Spleen (tissue), 13 donors: ENCODE measurements at regions of chr12 and their contacts with region 1.

Region 1: DNA sequence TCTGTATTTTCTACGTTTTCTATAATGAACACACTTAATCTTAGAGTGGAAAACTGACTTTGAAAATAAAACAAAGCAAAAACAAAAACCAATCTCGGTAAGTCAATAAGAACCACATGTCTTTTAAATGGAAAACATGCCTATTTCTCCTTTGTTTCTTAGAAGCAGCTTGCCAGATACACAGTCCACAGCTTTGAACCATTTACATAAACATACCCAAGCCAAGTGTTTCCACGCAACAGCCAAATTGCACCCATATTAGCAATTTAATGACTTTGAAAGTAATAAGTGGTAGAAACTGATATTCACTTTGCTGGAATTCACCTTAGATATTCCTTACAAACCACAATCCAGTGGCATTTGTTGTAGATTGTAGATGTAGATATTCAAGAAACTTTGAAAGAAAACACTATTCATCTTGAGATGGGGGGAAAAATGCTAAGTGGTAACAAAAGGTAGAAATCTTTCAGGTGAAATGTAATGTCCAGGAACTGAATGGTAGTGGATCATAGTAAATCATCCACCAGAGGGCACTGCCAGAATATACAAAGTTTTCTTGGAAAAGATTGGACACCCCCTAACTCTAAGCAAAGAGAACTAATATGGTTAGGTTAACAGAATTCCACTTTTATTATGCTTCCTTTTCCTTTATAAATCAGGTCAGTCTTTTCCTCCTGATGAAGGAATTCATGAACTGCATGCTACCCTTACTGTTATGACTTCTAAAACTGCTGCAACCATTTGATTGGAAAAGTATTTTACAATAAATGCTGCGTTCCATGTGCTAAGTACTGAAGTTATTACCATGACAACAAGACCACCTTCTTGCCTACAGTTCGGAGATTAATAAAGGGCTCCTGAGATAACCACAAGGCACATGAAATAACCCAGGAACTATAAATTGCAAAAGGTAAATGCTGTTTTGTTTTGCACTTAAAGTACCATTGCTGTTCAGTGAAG is 69.8 kb downstream of the RERG start:
- DNase-seq: no peak
- H3K4me3 ChIP-seq: no peak overlapping the region
- H3K27ac ChIP-seq: peak overlapping the region in 6 of 8 donors; percentile 3 to 60 (median 24)
- H3K4me1 ChIP-seq: peaks cover 0 to 31% (median 18%) of the 10 kb centered on the region in 6 donors
- H3K27me3 ChIP-seq: no peaks in the 10 kb centered on the region
- CTCF ChIP-seq: peak in 9 of 11 experiments; percentile 15 to 64 (median 45)
- POLR2A ChIP-seq: no peak

Region 2: DNA sequence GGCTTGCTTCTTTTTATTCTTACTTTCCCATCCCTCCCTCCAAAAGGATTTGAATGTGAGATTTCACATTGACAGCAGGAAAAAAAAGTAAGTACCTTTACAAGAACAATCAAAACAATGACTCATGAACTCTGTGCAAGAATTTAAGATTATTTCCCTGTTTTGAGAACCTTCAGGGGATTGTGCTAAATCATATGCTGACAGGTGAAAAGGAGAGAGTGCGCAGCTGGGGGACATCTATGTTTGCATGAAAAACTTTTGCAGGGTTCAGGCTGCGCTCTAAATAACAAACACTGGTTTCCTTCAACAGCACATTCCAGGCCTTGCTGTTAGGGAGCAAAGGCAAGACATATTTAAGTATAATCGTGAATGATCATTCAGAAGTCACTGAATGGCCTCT is 42.5 kb after region 1 on chr12:
- intact Hi-C with region 1: no loop called
- DNase-seq: no peak
- H3K4me3 ChIP-seq: no peak overlapping the region
- H3K27ac ChIP-seq: peak overlapping the region in 1 of 8 donors; percentile 20
- H3K4me1 ChIP-seq: peaks cover 0 to 7% (median 0%) of the 10 kb centered on the region in 6 donors
- H3K27me3 ChIP-seq: peaks cover 0 to 5% (median 0%) of the 10 kb centered on the region in 7 donors
- CTCF ChIP-seq: no peak
- POLR2A ChIP-seq: no peak

Region 3: DNA sequence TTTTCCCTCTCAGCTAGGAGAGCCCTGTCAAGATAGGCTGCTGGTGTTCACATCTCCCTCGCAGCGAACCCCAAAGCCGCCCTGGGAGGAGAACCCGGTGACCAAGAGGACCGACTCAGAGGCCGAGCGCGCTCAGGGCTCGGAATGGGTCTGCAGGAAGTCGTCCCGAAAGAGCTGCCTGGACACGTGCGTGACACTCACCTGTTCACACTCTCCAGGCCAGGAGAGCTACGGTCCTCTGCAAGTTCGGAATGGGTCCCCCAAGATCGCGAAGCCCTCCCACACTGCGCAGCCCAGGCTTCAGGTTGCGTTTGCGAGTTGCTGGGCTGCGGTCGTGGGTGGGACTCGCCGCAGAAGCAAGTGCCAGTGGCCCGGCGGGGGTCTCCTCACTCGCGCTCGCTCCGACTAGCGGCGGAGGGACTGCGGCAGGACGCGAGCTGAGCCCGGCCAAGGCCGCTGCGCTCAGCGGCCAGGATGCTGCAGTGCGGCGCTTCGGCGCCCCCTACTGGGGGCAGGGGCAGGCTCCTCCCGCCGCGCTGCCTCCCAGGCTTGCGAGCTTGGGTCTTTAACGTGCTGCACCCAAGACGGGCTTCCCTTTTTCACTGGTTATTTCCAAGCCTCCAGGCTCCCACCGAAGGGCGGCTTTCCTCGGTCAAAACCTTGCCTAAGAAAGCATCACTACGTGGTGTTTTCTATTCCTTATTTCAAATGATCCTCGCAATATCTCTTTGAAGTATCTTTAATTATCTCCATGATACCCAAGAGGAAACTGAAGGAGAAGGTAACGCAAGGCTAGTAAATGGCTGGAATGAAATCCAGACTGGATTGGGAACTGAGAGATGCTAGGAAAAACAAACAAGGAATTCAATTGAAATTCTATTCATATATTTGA is 69.8 kb after region 1 on chr12 and contains the start of gene RERG:
- intact Hi-C with region 1: loop called (anchors 10 kb)
- DNase-seq: peak; percentile 94
- H3K4me3 ChIP-seq: peak within 1 kb of the TSS; percentile 41 to 69 (median 46)
- H3K27ac ChIP-seq: peak within 1 kb of the TSS; percentile 53 to 88 (median 84)
- H3K4me1 ChIP-seq: peaks cover 0 to 26% (median 15%) of the 10 kb centered on the region in 6 donors
- H3K27me3 ChIP-seq: peaks cover 0 to 49% (median 4%) of the 10 kb centered on the region in 7 donors
- CTCF ChIP-seq: peak; percentile 70 to 99 (median 95)
- POLR2A ChIP-seq: no peak
- total RNA-seq, gene RERG: 16.4 to 74.7 (median 54.4) TPM